Posterior vena cava (tissue), 2 donors: ENCODE measurements at regions of chr11 and their contacts with region 1.

Region 1: GRCh38 chr11:8851316-8851715 is 59.7 kb upstream of the AKIP1 start:
- DNase-seq: no peak

Region 2: GRCh38 chr11:8911029-8911826 is 59.9 kb after region 1 on chr11 and contains the start of gene AKIP1:
- intact Hi-C with region 1: no loop called
- DNase-seq: peak; percentile 98
- total RNA-seq, gene AKIP1: 15.4 to 19.1 TPM

Region 3: GRCh38 chr11:9330387-9331384 is 479.4 kb after region 1 on chr11:
- intact Hi-C with region 1: loop called in 1 of 2 experiments (anchors 5 kb)
- DNase-seq: no peak